ENCODE measurements at regions of chr19 and their contacts with region 1.

Region 1: DNA sequence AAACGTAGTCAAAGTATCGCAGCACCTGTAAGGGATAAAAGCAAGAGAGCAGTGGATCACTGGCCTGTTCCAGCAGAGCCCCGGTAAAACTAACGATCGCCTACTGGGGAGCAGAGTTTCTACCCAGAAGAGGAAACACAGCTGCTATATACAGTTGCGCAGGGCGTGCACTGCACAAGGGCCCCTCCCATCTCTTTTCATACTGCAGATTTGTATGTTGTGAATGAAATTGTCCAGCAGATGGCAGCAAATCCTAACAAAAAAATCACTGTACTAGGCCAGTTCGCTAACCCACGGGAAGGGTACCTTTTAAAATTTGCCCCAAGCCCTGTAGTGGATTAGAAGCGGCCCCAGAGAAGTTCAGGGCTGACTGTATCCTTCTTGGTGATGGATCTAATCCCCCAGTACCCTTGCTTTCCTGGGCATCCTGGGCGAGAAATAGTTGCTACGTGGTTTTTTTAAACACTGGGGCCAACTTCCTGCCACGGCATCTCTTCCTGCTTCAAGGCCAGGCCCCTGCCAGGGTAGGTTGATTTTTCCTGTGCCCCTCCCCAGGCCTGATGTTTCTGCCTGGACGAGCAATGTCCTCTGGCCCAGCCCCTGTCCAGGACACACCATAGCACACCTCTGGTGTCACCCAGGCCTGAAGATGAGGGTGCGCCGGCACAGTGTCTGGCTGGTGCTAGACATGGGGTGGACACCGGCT is 127.0 kb downstream of the IER2 start:
- DNase-seq: peak; percentile 63
- H3K4me3 ChIP-seq: no peak overlapping the region
- H3K27ac ChIP-seq: no peak overlapping the region
- H3K4me1 ChIP-seq: no peaks in the 10 kb centered on the region
- H3K27me3 ChIP-seq: no peaks in the 10 kb centered on the region
- CTCF ChIP-seq: peak; percentile 50 to 55

Region 2: GRCh38 chr19:12974301-12975220 is 302.7 kb before region 1 on chr19:
- CTCF ChIA-PET with region 1: no interaction called
- dilution Hi-C with region 1: no loop called
- in situ Hi-C with region 1: no loop called
- intact Hi-C with region 1: loop called (anchors 5 kb)
- DNase-seq: no peak
- H3K4me3 ChIP-seq: no peak overlapping the region
- H3K27ac ChIP-seq: no peak overlapping the region
- H3K4me1 ChIP-seq: no peaks in the 10 kb centered on the region
- H3K27me3 ChIP-seq: peaks cover 3% of the 10 kb centered on the region
- CTCF ChIP-seq: no peak

Region 3: DNA sequence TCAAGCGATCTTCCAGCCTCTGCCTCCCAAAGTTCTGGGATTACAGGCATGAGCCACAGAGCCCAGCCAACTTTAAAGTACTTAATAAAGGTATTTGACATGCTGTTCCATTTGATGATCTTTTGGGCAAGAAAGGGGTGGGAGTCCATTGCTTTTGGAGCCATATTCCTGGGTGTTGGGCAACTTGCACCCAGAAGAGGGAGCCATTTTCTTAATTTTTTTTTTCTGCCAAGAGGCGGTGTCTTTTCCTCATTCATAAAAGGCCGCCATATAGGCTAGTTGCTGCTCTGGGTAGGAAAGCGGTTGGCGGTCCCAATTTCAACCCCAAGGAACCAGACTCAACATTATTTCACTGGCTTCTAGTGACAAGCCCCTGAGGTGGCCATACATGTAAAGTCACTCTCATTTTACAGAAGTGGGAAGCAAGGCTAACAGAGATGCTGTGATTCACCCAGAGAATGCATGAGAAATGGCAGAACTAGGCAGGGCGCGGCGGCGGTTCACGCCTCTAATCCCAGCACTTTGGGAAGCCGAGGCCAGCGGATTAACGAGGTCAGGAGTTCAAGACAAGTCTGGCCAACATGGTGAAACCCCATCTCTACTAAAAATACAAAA is 89.4 kb after region 1 on chr19:
- CTCF ChIA-PET with region 1: interaction called, 5 read pairs
- dilution Hi-C with region 1: no loop called
- in situ Hi-C with region 1: no loop called
- intact Hi-C with region 1: loop called (anchors 1 kb)
- DNase-seq: peak; percentile 5
- H3K4me3 ChIP-seq: no peak overlapping the region
- H3K27ac ChIP-seq: no peak overlapping the region
- H3K4me1 ChIP-seq: no peaks in the 10 kb centered on the region
- H3K27me3 ChIP-seq: no peaks in the 10 kb centered on the region
- CTCF ChIP-seq: peak; percentile 65 to 67

Region 4: DNA sequence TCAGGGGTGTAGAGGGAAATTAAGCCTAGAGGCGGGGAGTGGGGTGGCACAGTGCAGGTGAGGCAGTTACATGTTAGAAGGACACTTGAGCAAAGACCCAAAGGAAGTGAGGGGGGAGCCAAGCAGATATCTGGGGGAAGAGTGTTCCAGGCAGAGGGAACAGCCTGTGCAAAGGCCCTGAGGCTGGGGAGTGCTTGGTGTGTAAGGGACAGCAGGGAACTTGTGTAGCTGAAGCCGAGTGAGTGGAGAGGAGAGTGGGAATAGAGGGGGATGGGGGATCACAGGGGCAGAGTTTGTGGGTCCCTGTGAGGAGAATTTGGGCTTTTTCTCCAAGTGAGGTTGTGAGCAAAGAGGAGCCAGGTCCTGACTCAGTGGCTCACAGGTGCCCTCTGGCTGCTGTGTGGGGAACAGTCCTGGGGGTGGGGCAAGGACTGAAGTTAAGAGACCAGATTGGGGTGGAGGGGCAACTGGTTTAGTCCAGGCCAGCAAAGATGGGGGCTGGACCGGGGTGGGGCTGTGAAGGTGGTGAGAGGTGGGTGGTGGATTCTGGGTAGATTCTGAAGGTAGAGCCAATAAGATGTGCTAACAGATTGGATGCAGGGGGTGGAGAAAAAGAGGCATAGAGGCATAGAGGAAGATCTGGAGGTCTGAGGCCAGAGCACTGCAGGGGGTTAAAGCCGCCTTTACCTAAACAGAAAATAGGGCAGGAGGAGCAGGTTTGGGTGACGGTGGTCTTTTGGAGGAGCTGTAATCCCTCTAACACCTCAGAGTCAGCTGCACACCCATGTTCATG is 153.7 kb after region 1 on chr19:
- CTCF ChIA-PET with region 1: no interaction called
- dilution Hi-C with region 1: no loop called
- in situ Hi-C with region 1: loop called in 1 of 2 experiments (anchors 25 kb)
- intact Hi-C with region 1: loop called (anchors 1 kb)
- DNase-seq: peak; percentile 25
- H3K4me3 ChIP-seq: no peak overlapping the region
- H3K27ac ChIP-seq: no peak overlapping the region
- H3K4me1 ChIP-seq: no peaks in the 10 kb centered on the region
- H3K27me3 ChIP-seq: no peaks in the 10 kb centered on the region
- CTCF ChIP-seq: peak; percentile 90 to 97

Region 5: DNA sequence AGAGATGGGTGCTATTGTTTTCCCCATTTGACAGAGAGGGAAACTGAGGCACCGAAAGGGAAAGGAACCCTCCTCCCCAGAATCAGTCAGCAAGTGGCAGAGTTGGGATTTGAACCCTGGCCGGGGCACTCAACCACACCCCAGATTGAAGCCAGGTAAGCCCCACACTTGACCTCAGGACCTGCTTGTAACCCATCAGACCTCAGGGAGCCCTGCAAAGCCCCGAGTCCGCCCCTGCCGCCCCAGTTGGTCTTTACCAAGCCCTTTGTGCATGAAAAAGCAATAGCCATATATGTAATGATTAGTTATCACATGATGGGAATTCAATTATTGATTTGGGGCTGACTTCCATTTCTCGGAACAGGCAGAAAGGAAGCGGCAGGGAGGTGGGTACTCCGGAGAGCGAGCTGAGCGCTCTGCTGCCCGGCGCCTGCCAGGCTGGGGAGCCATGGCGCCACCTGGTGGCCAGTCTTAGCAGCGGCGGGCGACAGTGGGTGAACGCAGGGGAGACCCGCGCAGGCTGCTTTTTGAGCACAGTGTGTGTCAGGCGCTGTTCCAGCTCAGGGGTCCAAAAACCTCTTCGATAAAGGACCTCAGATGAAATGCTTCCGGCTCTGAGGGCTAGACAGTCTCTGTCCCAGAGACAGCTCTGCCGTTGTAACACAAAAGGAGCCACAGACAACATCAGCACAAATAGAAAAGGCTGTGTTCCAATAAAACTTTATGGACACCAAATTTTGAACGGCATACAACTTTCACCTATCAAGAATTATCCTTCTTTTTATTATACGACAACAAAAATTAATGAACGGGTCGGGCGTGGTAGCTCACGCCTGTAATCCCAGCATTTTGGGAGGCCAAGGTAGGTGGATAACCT is 311.9 kb after region 1 on chr19:
- CTCF ChIA-PET with region 1: interaction called, 10 read pairs
- dilution Hi-C with region 1: no loop called
- in situ Hi-C with region 1: loop called (anchors 5 kb)
- intact Hi-C with region 1: loop called (anchors 1 kb)
- DNase-seq: peak; percentile 40
- H3K4me3 ChIP-seq: no peak overlapping the region
- H3K27ac ChIP-seq: no peak overlapping the region
- H3K4me1 ChIP-seq: no peaks in the 10 kb centered on the region
- H3K27me3 ChIP-seq: no peaks in the 10 kb centered on the region
- CTCF ChIP-seq: peak; percentile 74 to 97

Region 6: DNA sequence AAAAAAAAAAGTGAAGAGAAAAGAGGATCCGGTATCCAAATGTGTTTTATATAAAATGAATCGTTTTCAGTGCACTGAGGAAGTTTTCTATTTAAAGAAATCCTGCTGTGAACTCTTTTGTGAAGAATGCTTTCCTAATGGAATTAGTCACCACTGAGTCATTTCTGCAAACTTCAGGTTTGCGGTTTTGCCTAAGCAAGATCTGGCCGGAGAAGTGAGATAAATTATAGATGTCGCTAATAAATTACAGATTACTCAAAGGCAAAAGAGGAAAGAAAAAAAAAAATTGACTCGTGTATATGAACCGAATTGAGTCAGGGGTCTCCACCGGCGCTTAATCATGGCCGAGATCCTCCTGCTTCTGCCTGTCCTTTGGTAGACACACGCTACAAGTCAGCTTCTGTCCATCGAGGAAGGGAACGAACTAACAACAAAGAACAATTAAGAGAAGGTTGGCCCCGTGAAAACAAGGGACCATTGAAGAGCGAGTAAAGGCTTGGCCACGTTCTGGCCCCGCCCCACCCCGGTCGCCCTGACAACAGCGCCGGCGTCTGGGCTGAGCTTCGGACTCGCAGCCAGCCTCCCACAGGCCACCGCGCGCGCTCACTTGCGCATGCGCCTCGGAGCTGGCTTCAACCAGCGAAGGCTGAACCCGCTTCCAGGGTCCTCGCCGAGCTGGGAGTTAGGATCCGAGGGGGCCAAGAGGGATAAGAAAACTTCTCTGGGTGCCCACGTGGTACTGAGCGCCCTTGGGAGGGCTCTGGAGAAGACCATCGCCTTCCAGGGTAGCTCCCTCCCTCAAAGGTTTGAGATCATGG is 454.1 kb after region 1 on chr19:
- CTCF ChIA-PET with region 1: no interaction called
- dilution Hi-C with region 1: no loop called
- in situ Hi-C with region 1: loop called (anchors 10 kb)
- intact Hi-C with region 1: no loop called
- DNase-seq: peak; percentile 93
- H3K4me3 ChIP-seq: peak overlapping the region; percentile 47 to 62 (median 54)
- H3K27ac ChIP-seq: peak overlapping the region; percentile 97
- H3K4me1 ChIP-seq: peaks cover 24% of the 10 kb centered on the region
- H3K27me3 ChIP-seq: no peaks in the 10 kb centered on the region
- CTCF ChIP-seq: no peak

Measured in mammary epithelial cell (primary cell).